ENCODE measurements at regions of chr1 and their contacts with region 1.

Region 1: DNA sequence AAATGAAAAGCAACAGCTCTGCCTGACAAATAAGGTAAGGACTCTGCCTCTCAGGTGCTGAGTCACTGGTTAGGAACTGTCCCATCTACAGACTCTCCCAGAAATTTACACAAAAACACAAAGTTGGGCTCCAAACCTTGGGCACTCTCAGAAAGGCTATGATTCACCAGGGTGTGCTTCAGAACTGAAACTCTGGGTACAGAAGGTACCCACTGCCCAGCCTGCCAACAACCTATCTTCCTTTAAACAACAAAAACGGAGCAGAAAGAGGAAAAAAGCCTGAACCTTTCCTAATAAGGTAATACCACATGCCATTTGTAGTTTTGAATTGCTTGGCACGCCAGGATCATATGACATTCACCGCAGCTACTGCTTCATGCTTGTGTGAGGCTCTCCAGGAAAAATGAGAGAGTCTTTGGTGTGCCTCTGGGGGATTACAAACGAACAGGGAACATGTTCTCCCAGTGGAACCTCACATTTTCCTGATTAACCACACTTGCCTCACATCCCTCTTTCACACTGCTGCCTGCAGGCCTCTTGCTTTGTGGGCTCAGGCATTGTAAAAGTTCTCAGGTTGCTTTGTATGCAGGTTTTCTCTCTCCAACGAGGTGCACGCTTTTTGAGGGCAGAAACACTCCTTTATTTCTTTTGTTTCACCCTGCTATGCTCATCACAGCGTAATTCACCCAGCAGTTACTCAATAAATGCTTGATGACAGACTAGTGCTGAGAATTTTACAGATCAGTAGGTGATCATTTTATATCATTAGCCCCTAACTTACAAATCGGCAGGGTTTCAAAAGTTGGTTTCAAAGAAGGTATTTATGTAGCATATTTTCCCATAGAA is 65.1 kb downstream of the GADD45A start:
- DNase-seq: no peak
- H3K4me3 ChIP-seq: no peak overlapping the region
- H3K4me1 ChIP-seq: peaks cover 18% of the 10 kb centered on the region
- H3K27me3 ChIP-seq: no peaks in the 10 kb centered on the region

Region 2: GRCh38 chr1:67559222-67559700 is 190.8 kb before region 1 on chr1:
- in situ Hi-C with region 1: loop called (anchors 10 kb)
- DNase-seq: no peak
- H3K4me3 ChIP-seq: no peak overlapping the region
- H3K4me1 ChIP-seq: no peaks in the 10 kb centered on the region
- H3K27me3 ChIP-seq: no peaks in the 10 kb centered on the region

Measured in HAP-1 (cell line).